ENCODE measurements at regions of chr9 and their contacts with region 1.

Region 1: GRCh38 chr9:12819436-12820185 is 44.8 kb downstream of the LURAP1L start:
- DNase-seq: peak; percentile 19
- H3K4me3 ChIP-seq: no peak overlapping the region
- H3K27ac ChIP-seq: peak overlapping the region; percentile 79 to 84 (median 81)
- H3K4me1 ChIP-seq: peaks cover 15 to 48% (median 41%) of the 10 kb centered on the region in 4 donors
- H3K27me3 ChIP-seq: no peaks in the 10 kb centered on the region
- CTCF ChIP-seq: peak; percentile 28 to 51 (median 49)
- EP300 ChIP-seq: no peak
- POLR2A ChIP-seq: no peak

Region 2: DNA sequence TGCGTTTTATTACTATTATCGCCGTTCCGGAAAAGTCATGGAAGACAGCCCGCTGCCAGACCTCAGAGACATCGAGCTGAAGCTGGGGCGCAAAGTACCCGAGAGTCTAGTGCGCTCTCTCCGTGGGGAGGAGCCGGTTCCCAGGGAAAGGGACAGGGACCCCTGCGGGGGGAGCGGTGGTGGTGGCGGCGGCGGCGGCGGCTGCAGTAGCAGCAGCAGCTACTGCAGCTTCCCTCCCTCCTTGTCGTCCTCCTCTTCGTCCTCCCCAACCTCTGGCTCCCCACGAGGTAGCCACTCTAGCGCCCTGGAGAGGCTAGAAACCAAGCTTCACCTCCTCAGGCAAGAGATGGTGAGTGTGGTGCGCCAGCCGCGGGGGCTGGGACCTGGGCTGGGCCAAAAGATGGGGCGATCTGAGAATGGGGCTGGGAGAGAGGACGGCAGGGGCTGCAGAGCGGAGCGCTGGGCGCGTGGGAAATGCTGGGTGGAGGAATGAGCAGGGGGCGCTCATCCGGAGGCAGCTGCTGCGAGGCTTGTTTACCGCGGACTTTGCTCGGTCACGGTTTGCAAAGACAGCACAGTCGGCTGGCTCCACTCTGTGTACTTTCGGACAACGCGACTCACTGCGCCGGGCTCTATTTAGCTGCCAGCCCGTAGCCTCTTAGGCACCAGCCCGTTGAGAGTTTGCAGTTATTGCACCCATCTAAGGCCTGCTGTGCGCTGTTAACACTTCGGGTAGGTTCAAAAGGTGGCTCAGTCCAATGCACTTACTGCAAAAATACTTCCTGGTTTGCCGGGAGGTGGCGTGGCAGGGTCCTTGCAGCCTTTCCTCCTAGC is 43.7 kb before region 1 on chr9:
- in situ Hi-C with region 1: no loop called
- intact Hi-C with region 1: loop called (anchors 10 kb)
- DNase-seq: peak; percentile 89
- H3K4me3 ChIP-seq: peak overlapping the region; percentile 66 to 85 (median 77)
- H3K27ac ChIP-seq: peak overlapping the region; percentile 90 to 98 (median 97)
- H3K4me1 ChIP-seq: peaks cover 0 to 29% (median 7%) of the 10 kb centered on the region in 4 donors
- H3K27me3 ChIP-seq: no peaks in the 10 kb centered on the region
- CTCF ChIP-seq: peak; percentile 34 to 56 (median 45)
- EP300 ChIP-seq: no peak
- POLR2A ChIP-seq: peak; percentile 72

Measured in transverse colon (tissue), 4 donors.